Endothelial cell of umbilical vein (primary cell): ENCODE measurements at regions of chr11 and their contacts with region 1.

Region 1: DNA sequence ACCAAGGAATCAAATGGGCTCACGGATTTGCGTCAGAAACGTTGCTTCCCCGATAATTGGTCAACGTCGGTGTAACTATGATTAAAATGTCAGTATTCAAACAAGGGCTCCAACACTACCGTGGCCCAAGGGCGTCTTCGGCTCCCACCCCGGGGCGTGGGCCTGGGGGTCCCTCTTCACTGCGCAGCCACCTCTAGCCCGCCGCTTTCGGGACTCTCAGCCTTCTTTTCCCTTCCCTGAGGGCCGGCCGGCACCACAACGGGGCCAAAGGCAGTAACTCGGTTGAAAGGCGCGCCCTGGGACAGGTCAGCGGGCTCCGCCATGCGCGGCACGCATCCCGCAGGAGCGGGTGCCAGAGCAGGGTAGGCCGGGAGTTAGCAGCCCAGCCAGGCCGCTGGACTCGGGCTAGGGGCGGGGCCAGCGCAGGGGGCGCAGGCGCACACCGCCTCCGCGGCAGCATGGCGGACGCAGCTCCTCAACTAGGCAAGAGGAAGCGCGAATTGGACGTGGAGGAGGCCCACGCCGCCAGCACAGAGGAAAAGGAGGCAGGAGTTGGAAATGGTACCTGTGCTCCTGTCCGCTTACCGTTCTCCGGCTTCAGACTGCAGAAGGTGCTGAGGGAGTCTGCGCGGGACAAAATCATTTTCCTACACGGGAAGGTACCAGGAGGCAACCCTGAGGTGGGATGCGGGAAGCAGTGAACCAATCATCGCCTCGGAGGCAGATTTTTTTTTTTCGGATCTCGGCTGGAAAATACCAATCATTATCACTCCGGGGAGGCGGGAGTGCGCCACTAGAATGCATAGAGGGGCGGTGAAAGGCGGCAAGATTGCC is at the start of gene DCPS:
- DNase-seq: peak; percentile 96
- H3K4me3 ChIP-seq: peak within 1 kb of the TSS; percentile 28 to 74 (median 35)
- H3K27ac ChIP-seq: peak within 1 kb of the TSS; percentile 55
- H3K4me1 ChIP-seq: no peaks in the 10 kb centered on the region
- H3K27me3 ChIP-seq: no peaks in the 10 kb centered on the region
- CTCF ChIP-seq: no peak
- POLR2A ChIP-seq: peak; percentile 92
- total RNA-seq, gene DCPS: 19.6 and 21.8 TPM in 2 replicates

Region 2: DNA sequence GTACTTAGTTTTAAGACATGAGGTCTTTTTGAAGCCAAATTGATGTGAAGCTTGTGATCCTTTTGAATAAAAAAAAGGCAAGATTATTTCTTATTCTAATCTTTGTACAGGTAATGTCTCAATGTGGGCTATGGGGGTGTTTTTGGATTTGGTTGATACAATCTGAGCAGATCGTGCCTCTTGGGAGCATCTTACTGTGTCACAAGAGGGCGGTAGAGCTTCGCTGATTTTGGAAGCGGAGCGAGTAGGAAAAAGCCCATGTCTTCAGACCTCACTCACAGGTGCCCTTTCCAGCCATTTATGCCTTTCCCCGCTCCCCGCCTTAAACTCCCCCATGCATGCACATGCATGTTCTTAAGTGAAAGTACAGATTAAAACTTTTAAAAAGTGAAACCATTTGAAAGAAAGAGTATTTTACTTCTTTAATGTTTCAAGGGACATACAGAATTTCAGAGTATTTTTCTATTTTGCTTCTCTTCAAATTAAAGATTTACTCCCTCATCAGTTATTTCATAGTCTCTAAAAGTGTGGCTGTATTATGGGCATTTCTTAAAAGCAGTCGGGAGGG is 380.7 kb before region 1 on chr11:
- CTCF ChIA-PET with region 1: no interaction called
- POLR2A ChIA-PET with region 1: no interaction called
- dilution Hi-C with region 1: no loop called
- intact Hi-C with region 1: loop called (anchors 5 kb)
- DNase-seq: peak; percentile 69
- H3K4me3 ChIP-seq: no peak overlapping the region
- H3K27ac ChIP-seq: no peak overlapping the region
- H3K4me1 ChIP-seq: no peaks in the 10 kb centered on the region
- H3K27me3 ChIP-seq: peaks cover 2 to 7% of the 10 kb centered on the region in 2 experiments
- CTCF ChIP-seq: peak; percentile 73 to 74
- POLR2A ChIP-seq: no peak

Region 3: GRCh38 chr11:126268708-126269579 is 34.9 kb before region 1 on chr11 and contains the starts of genes FOXRED1 and SRPRA:
- CTCF ChIA-PET with region 1: no interaction called
- POLR2A ChIA-PET with region 1: interaction called, 4 read pairs
- dilution Hi-C with region 1: no loop called
- intact Hi-C with region 1: loop called (anchors 1 kb)
- DNase-seq: peak; percentile 99
- H3K4me3 ChIP-seq: peak within 1 kb of the TSS; percentile 81 to 92 (median 87)
- H3K27ac ChIP-seq: peak within 1 kb of the TSS; percentile 82
- H3K4me1 ChIP-seq: peaks cover 12% of the 10 kb centered on the region
- H3K27me3 ChIP-seq: no peaks in the 10 kb centered on the region
- CTCF ChIP-seq: no peak
- POLR2A ChIP-seq: peak; percentile 92
- total RNA-seq, gene FOXRED1: 31.0 and 33.5 TPM in 2 replicates
- total RNA-seq, gene SRPRA: 104 and 106 TPM in 2 replicates

Region 4: DNA sequence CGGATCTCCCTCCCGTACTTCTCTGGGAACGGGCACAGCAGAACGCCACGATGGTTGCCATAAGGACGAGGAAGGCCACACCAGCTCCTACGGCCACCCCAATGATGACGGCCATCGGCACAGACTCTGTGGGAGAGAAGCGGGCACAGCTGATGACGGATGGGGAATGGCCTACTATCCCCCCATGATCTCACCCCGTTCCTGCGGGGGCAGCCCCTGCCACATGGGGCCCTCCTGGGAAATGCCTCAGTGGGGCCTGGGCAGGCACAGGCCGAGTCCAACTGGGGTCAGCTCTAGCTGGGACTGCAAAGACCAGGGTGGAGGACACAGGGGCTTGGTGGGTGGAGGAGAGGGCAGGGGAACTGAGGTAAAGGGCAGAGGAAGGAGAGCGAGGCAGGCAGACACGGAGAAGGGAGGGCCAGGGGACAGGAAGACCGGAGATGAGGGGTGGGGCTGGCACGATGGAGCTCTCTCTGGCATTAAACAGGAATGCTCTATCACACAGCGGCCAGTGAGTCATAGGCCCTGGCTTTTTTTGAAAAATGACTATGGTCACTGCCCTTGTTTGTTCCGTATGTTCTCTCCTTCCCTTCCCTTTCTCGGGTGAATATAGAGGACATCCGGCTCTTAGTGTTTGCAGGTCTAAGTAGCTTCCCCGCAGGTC is 127.7 kb after region 1 on chr11:
- CTCF ChIA-PET with region 1: interaction called, 12 read pairs
- POLR2A ChIA-PET with region 1: no interaction called
- dilution Hi-C with region 1: no loop called
- intact Hi-C with region 1: no loop called
- DNase-seq: peak; percentile 62
- H3K4me3 ChIP-seq: no peak overlapping the region
- H3K27ac ChIP-seq: peak overlapping the region; percentile 58
- H3K4me1 ChIP-seq: peaks cover 11% of the 10 kb centered on the region
- H3K27me3 ChIP-seq: no peaks in the 10 kb centered on the region
- CTCF ChIP-seq: no peak
- POLR2A ChIP-seq: no peak